AG04449 (cell line): ENCODE measurements at regions of chr11 and their contacts with region 1.

Region 1: GRCh38 chr11:44835938-44836337 is 109.2 kb downstream of the TSPAN18 start:
- DNase-seq: no peak
- H3K4me3 ChIP-seq: no peak overlapping the region
- CTCF ChIP-seq: no peak

Region 2: DNA sequence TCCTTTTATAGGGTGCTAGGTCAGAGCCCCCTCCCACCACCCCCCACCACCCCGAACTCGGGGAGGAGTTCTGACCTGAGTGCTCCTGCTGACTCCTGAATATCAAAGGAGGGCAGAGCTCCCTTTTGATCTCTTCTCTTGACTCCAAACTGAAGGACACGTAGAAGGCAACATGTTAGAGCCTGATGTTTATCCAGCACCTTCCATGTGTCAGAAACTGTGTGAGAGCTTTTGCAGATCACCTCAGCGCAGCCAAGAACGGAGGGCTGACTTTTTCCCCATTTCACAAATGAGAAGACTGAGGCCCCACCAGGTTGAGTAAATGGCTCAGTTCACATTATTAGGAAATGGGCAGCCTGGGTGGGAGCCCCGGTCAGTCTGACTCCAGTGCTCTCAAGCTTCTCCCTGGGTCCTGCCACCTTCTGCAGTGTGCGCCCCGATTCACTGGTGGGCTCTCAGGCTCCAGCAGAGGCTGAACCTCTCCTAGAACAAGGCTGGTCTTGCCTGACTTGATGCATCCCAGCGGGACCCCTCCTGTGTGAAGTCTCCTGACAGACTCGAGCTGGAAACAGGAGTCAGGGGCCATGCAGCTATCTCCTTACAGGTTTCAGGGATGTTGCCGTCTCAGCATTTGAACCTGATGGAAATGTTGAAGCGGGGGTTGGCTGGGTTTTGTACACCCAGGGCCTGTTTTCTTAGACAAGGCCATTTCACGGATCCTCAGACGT is 10.7 kb before region 1 on chr11:
- CTCF ChIA-PET with region 1: interaction called, 10 read pairs
- POLR2A ChIA-PET with region 1: no interaction called
- DNase-seq: no peak
- H3K4me3 ChIP-seq: no peak overlapping the region
- CTCF ChIP-seq: no peak